ENCODE measurements at regions of chr15 and their contacts with region 1.

Region 1: DNA sequence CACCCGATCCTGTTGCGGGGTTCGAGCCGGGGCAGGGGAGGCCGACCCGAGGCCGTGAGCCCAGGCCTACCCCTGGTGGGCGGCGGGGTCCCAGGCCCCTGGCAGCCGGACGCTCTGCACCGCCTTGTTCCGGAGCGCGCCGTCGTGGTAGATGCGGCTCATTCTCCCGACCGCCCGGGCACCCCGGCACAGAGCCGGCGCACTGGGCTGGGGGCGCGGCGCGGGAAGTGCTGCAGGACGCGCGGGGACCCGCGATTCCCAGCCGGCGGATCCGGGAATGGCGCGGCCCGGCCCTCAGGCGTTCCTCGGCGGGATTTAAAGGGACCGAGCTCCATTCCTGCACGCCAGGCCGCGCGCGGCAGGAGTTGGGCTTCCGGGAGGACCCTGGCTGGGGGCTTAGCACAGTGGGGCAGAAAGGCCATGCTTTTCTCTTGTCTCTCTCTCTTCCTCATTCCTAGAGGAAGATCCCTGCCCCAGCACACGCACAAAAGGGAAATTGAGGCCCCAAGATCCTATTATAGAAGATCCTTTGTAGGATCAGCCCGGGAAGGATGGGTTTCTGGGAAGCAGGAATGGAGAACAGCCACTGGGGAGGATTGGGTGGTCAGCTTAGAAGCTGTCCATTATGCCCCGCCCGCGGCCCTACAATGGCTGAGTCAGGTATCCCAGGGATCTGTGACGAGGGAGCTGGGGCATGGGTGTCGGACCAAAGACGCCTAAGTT is at the start of gene ARPIN:
- DNase-seq: peak; percentile 71
- H3K4me3 ChIP-seq: peak within 1 kb of the TSS; percentile 80
- H3K27ac ChIP-seq: peak within 1 kb of the TSS; percentile 95
- H3K4me1 ChIP-seq: no peaks in the 10 kb centered on the region
- H3K27me3 ChIP-seq: no peaks in the 10 kb centered on the region
- CTCF ChIP-seq: no peak
- total RNA-seq, gene ARPIN: 31.7 to 36.7 TPM

Region 2: GRCh38 chr15:89851673-89852341 is 61.0 kb before region 1 on chr15:
- intact Hi-C with region 1: no loop called
- DNase-seq: no peak
- H3K4me3 ChIP-seq: no peak overlapping the region
- H3K27ac ChIP-seq: peak overlapping the region; percentile 84
- H3K4me1 ChIP-seq: no peaks in the 10 kb centered on the region
- H3K27me3 ChIP-seq: no peaks in the 10 kb centered on the region
- CTCF ChIP-seq: no peak

Region 3: DNA sequence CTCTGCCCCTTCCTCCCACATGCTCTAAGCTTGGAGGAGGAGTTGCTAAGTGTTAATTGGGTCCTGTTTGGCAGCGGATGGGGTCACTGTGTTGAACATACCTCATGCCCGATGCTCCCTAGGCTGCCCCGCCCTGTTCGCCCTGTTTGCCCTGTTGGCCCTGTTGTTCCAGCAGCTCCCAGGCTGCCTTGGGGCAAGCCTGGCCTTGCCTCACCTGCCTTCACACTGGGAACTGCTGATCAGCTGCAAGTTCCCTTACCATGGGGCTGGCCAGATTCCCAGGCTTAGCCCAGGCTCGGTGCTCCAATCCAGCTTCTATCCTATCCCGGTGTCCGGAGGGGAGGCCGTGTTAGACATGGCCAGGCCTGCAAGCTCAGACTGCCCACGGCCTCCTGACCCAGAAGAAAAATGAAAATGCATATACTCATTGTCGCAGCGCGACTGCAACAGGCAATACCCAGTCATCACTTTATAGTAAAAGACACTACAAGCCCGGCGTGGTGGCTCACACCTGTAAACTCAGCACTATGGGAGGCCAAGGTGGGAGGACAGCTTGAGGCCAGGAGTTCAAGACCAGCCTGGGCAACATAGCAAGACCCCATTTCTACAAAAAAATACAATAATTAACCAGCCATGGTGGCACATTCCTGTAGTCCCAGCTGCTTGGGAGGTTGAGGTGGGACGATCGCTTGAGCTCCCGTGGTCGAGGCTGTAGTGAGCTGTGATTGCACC is 45.4 kb after region 1 on chr15:
- intact Hi-C with region 1: loop called (anchors 5 kb)
- DNase-seq: peak; percentile 78
- H3K4me3 ChIP-seq: no peak overlapping the region
- H3K27ac ChIP-seq: no peak overlapping the region
- H3K4me1 ChIP-seq: no peaks in the 10 kb centered on the region
- H3K27me3 ChIP-seq: no peaks in the 10 kb centered on the region
- CTCF ChIP-seq: no peak

Measured in colonic mucosa (tissue), 4 donors.